Activated T-helper 2 cell treated with anti-CD3 and anti-CD28 coated beads, Interferon-gamma antibody, Interleukin-2, Interleukin-4, amounts not matched to agents 10 μg/mL and 5 μg/mL and 100 μg/mL, durations not matched to agents 14 hours and 24 hours and 36 hours (primary cell): ENCODE measurements at regions of chr4 and their contacts with region 1.

Region 1: GRCh38 chr4:26076000-26076587 is 162.1 kb downstream of the SMIM20 start:
- DNase-seq: peak; percentile 65
- H3K4me3 Mint-ChIP-seq: peak overlapping the region; percentile 58
- H3K27ac Mint-ChIP-seq: peak overlapping the region; percentile 99
- H3K4me1 Mint-ChIP-seq: peaks cover 77% of the 10 kb centered on the region
- H3K27me3 Mint-ChIP-seq: no peaks in the 10 kb centered on the region

Region 2: DNA sequence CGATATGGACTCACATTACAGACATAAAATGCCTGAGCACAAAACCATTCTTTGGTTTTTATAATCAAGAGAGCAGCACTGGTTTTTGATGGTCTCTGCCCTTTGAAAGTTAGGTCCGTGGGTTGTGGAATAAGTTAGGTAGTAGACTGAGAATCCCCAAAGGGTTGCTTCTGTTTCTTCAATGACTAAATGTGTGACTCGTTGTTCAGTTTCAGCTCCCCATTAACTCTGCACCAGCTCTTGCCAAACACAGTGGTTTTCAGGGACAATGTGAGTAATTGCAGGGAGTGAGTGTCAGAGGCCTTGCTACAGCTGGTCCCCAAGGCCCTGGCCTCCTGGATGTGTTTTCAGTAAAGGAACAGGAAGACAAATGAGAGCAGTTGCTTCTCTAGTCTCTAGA is 137.3 kb before region 1 on chr4:
- intact Hi-C with region 1: loop called (anchors 1 kb)
- DNase-seq: peak; percentile 21
- H3K4me3 Mint-ChIP-seq: peak overlapping the region; percentile 59
- H3K27ac Mint-ChIP-seq: peak overlapping the region; percentile 96
- H3K4me1 Mint-ChIP-seq: peaks cover 34% of the 10 kb centered on the region
- H3K27me3 Mint-ChIP-seq: no peaks in the 10 kb centered on the region

Region 3: DNA sequence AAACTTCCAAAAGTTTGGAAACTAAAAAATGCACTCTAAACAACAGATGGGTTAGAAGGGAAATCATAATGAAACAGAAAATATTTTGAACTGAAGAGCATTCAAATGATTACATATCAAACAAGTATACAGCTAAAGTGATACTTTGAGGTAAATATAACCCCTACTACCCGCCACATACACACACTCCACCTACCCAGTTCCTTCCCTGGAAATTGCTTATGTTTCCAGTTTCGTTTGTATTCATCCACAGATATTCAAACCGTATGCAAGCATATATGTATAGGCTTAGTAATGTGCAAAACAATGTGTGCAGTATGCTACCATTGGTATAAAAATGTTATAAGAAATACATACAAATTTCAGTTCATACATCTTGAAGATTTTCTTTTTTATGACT is 66.6 kb before region 1 on chr4:
- intact Hi-C with region 1: loop called (anchors 1 kb)
- DNase-seq: no peak
- H3K4me3 Mint-ChIP-seq: no peak overlapping the region
- H3K27ac Mint-ChIP-seq: no peak overlapping the region
- H3K4me1 Mint-ChIP-seq: peaks cover 42% of the 10 kb centered on the region
- H3K27me3 Mint-ChIP-seq: peaks cover 8% of the 10 kb centered on the region

Region 4: GRCh38 chr4:26022346-26023202 is 53.5 kb before region 1 on chr4:
- intact Hi-C with region 1: no loop called
- DNase-seq: no peak
- H3K4me3 Mint-ChIP-seq: no peak overlapping the region
- H3K27ac Mint-ChIP-seq: no peak overlapping the region
- H3K4me1 Mint-ChIP-seq: peaks cover 31% of the 10 kb centered on the region
- H3K27me3 Mint-ChIP-seq: peaks cover 2% of the 10 kb centered on the region

Region 5: DNA sequence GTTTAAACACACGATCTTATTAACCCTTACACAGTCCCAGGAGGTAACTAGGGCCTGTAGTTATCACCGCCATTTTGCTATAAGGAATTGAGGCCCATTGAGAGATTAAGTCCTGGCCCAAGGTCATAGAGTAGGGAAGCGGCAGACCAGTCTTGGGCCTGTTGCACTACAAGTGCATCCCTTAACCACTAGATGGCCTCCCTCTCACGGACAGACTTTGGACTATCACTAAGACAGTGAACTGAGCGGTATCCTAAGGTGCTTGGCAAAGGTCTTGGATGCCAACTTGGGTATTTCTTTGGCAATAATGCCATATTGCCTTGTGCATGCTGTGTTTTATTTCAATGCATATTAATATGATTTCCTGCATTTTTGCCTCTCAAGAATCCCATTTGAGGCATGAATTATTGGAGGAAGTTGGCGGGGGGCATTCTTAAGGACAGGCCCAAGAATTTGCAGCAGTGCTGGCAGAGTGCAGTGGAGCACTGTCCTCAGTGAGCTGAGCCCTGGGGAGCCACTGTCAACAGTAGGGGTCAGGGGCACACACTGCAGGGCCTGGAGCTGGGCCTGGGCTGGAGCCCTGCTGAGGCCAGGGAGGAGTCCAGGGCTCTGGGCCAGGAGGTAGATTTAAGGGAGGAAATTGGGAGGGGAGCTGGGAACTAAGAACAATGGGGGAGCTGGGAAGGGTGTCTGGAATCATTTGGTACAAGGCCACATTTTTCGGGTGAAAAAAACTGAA is 14.7 kb before region 1 on chr4:
- intact Hi-C with region 1: loop called (anchors 2 kb)
- DNase-seq: no peak
- H3K4me3 Mint-ChIP-seq: no peak overlapping the region
- H3K27ac Mint-ChIP-seq: no peak overlapping the region
- H3K4me1 Mint-ChIP-seq: peaks cover 22% of the 10 kb centered on the region
- H3K27me3 Mint-ChIP-seq: no peaks in the 10 kb centered on the region

Region 6: GRCh38 chr4:26093551-26093950 is 17.5 kb after region 1 on chr4:
- intact Hi-C with region 1: loop called (anchors 1 kb)
- DNase-seq: no peak
- H3K4me3 Mint-ChIP-seq: no peak overlapping the region
- H3K27ac Mint-ChIP-seq: peak overlapping the region; percentile 91
- H3K4me1 Mint-ChIP-seq: peaks cover 62% of the 10 kb centered on the region
- H3K27me3 Mint-ChIP-seq: no peaks in the 10 kb centered on the region

Region 7: DNA sequence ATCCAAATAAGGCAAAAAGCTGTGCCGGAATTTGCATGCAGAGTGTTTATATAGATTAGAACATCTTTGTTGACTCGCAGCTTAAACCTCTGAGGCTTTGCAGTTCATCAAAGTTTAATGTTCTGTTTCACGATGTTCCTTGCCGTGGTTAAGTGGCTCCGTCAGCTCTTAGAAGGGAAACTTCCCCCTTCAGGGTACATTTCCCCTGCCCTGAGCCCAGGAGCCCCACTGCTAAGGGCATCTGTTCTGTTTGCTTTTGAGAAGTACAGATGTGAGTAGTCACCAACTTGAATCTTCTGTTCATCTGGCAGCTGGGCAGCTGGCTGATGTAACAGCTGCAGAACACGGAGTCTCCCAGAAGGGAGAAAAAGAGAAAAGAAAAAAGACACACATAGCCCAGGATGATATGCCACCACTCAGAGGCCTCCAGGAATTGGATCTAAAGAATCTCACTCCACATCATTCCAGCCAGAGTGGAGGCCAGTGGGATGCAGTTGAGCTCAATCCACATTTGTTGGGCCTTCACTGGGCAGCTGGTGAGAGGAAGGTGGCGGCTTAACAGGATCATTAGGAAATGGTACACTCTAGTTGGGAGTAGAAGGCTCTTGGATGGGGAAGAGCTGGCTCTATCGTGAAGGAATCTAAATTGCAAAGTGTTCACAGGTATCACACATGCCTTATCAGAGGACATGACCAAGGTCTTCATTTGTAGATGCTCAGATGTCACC is 66.0 kb after region 1 on chr4:
- intact Hi-C with region 1: loop called (anchors 1 kb)
- DNase-seq: no peak
- H3K4me3 Mint-ChIP-seq: peak overlapping the region; percentile 22
- H3K27ac Mint-ChIP-seq: peak overlapping the region; percentile 89
- H3K4me1 Mint-ChIP-seq: peaks cover 73% of the 10 kb centered on the region
- H3K27me3 Mint-ChIP-seq: no peaks in the 10 kb centered on the region

Region 8: GRCh38 chr4:26248647-26249046 is 172.6 kb after region 1 on chr4:
- intact Hi-C with region 1: no loop called
- DNase-seq: no peak
- H3K4me3 Mint-ChIP-seq: no peak overlapping the region
- H3K27ac Mint-ChIP-seq: no peak overlapping the region
- H3K4me1 Mint-ChIP-seq: peaks cover 6% of the 10 kb centered on the region
- H3K27me3 Mint-ChIP-seq: peaks cover 1% of the 10 kb centered on the region

Region 9: GRCh38 chr4:26319467-26319948 is 243.4 kb after region 1 on chr4:
- intact Hi-C with region 1: loop called (anchors 1 kb)
- DNase-seq: peak; percentile 99
- H3K4me3 Mint-ChIP-seq: peak overlapping the region; percentile 97
- H3K27ac Mint-ChIP-seq: peak overlapping the region; percentile 100
- H3K4me1 Mint-ChIP-seq: peaks cover 29% of the 10 kb centered on the region
- H3K27me3 Mint-ChIP-seq: no peaks in the 10 kb centered on the region